Activated CD4-positive, alpha-beta memory T cell treated with anti-CD3 and anti-CD28 coated beads for 36 hours (primary cell): ENCODE measurements at regions of chr19 and their contacts with region 1.

Region 1: GRCh38 chr19:34926685-34927375 is at the start of gene ZNF30:
- DNase-seq: peak; percentile 91
- H3K4me3 Mint-ChIP-seq: peak within 1 kb of the TSS; percentile 89
- H3K27ac Mint-ChIP-seq: peak within 1 kb of the TSS; percentile 62
- H3K4me1 Mint-ChIP-seq: peaks cover 8% of the 10 kb centered on the region
- H3K27me3 Mint-ChIP-seq: peaks cover 2% of the 10 kb centered on the region
- total RNA-seq, gene ZNF30: 3.7 to 4.2 TPM

Region 2: DNA sequence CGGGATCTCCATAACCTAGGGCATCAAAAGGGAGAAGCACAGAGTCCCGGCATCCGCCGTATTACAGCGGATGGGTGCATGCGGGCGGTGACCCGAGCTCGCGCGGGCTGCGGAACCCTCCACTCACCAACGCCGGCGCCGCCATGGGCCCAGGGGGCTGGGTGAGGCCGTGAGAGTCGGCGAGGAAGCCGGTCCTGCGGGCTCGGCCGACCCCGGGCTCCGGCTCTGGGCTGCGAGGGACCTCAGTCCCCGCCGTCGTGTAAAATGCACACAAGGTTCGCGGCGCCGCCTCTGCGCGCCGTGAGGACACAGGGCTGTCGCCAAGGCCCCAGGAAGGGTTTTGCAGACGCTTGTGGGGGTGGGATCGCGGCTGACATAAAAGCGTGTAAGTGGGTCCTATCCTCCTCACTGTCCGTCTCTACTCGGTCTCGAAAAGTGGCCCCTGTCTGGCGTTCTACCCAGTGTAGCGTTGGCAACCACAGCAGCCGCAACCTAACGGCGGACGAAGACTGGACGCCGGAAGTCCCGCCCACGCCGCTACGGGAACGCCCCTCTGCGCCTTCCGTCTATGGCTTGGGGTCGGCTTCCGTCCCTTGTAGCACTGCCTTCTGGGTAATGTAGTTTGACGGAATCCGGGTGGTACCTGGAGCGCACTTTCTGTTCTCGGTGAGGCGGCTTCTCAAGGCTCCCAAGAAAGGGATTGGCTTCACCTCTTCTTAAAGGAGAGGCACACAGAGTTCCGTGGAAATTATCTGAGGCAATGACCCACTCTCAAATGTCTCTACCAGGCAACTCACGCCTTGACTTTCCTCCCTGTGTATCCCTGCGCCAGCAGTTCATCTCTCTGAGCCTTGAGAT is 153.9 kb before region 1 on chr19 and contains the start of gene ZNF599:
- CTCF ChIA-PET with region 1: no interaction called
- POLR2A ChIA-PET with region 1: no interaction called
- intact Hi-C with region 1: no loop called
- DNase-seq: peak; percentile 93
- H3K4me3 Mint-ChIP-seq: peak within 1 kb of the TSS; percentile 89
- H3K27ac Mint-ChIP-seq: peak within 1 kb of the TSS; percentile 78
- H3K4me1 Mint-ChIP-seq: peaks cover 16% of the 10 kb centered on the region
- H3K27me3 Mint-ChIP-seq: no peaks in the 10 kb centered on the region
- total RNA-seq, gene ZNF599: 3.2 to 3.7 TPM

Region 3: GRCh38 chr19:34894780-34895179 is 32.0 kb before region 1 on chr19:
- CTCF ChIA-PET with region 1: no interaction called
- POLR2A ChIA-PET with region 1: no interaction called
- intact Hi-C with region 1: no loop called
- DNase-seq: no peak
- H3K4me3 Mint-ChIP-seq: no peak overlapping the region
- H3K27ac Mint-ChIP-seq: no peak overlapping the region
- H3K4me1 Mint-ChIP-seq: no peaks in the 10 kb centered on the region
- H3K27me3 Mint-ChIP-seq: no peaks in the 10 kb centered on the region

Region 4: GRCh38 chr19:34963573-34964409 is 37.0 kb after region 1 on chr19 and contains the start of gene ZNF792:
- CTCF ChIA-PET with region 1: no interaction called
- POLR2A ChIA-PET with region 1: no interaction called
- intact Hi-C with region 1: loop called (anchors 5 kb)
- DNase-seq: peak; percentile 67
- H3K4me3 Mint-ChIP-seq: peak within 1 kb of the TSS; percentile 94
- H3K27ac Mint-ChIP-seq: peak within 1 kb of the TSS; percentile 58
- H3K4me1 Mint-ChIP-seq: peaks cover 26% of the 10 kb centered on the region
- H3K27me3 Mint-ChIP-seq: no peaks in the 10 kb centered on the region
- total RNA-seq, gene ZNF792: 6.4 to 6.9 TPM